ENCODE measurements at regions of chr2 and their contacts with region 1.

Region 1: GRCh38 chr2:19746611-19747309 is 155.0 kb downstream of the TTC32 start:
- DNase-seq: peak; percentile 47 to 83
- H3K4me3 ChIP-seq: no peak overlapping the region
- H3K27ac ChIP-seq: no peak overlapping the region
- H3K4me1 ChIP-seq: no peaks in the 10 kb centered on the region
- H3K27me3 ChIP-seq: no peaks in the 10 kb centered on the region
- CTCF ChIP-seq: peak; percentile 77 to 84 (median 77)
- EP300 ChIP-seq: no peak
- POLR2A ChIP-seq: no peak
- RAD21 ChIP-seq: peak; percentile 92 to 96

Region 2: DNA sequence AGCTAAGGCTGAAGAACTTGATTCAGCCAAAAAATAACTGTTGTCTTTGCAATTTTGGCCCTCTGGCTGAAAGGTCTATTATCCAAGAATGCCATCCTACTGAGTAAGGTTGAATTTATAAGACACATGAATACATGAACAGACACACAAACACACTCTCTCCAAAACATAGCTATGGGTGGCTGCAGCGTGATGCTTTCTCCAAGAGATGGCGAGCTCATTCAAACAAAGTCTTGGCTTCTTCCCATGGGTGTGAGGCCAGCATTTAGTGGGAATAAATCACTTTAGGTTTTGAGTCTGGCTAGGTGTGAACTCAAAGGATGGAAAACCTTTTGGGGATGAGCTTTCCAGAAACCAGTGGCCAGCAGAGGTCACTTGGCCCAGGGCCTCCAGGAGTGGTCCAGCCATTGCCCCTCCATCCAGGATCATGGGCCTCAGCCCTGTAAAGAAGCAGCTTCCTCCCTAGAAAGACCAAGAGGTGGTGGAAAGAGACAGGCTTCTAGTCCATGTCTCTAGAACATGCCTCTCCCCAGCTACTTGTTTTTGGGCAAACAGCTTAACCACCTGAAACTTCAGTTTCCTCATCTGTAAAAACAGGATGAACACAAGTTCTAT is 377.3 kb before region 1 on chr2:
- CTCF ChIA-PET with region 1: interaction called, 55 read pairs
- POLR2A ChIA-PET with region 1: no interaction called
- DNase-seq: no peak
- H3K4me3 ChIP-seq: no peak overlapping the region
- H3K27ac ChIP-seq: no peak overlapping the region
- H3K4me1 ChIP-seq: no peaks in the 10 kb centered on the region
- H3K27me3 ChIP-seq: peaks cover 2 to 17% (median 8%) of the 10 kb centered on the region in 4 experiments
- CTCF ChIP-seq: peak; percentile 17 to 74 (median 51)
- EP300 ChIP-seq: no peak
- POLR2A ChIP-seq: no peak
- RAD21 ChIP-seq: peak; percentile 76 to 83

Region 3: GRCh38 chr2:19702267-19702666 is 44.5 kb before region 1 on chr2:
- CTCF ChIA-PET with region 1: interaction called, 23 read pairs
- POLR2A ChIA-PET with region 1: no interaction called
- DNase-seq: no peak
- H3K4me3 ChIP-seq: no peak overlapping the region
- H3K27ac ChIP-seq: no peak overlapping the region
- H3K4me1 ChIP-seq: no peaks in the 10 kb centered on the region
- H3K27me3 ChIP-seq: no peaks in the 10 kb centered on the region
- CTCF ChIP-seq: no peak
- EP300 ChIP-seq: no peak
- POLR2A ChIP-seq: no peak
- RAD21 ChIP-seq: no peak

Region 4: GRCh38 chr2:19728125-19728524 is 18.6 kb before region 1 on chr2:
- CTCF ChIA-PET with region 1: interaction called, 24 read pairs
- POLR2A ChIA-PET with region 1: no interaction called
- DNase-seq: no peak
- H3K4me3 ChIP-seq: no peak overlapping the region
- H3K27ac ChIP-seq: no peak overlapping the region
- H3K4me1 ChIP-seq: no peaks in the 10 kb centered on the region
- H3K27me3 ChIP-seq: no peaks in the 10 kb centered on the region
- CTCF ChIP-seq: no peak
- EP300 ChIP-seq: no peak
- POLR2A ChIP-seq: no peak
- RAD21 ChIP-seq: no peak

Region 5: DNA sequence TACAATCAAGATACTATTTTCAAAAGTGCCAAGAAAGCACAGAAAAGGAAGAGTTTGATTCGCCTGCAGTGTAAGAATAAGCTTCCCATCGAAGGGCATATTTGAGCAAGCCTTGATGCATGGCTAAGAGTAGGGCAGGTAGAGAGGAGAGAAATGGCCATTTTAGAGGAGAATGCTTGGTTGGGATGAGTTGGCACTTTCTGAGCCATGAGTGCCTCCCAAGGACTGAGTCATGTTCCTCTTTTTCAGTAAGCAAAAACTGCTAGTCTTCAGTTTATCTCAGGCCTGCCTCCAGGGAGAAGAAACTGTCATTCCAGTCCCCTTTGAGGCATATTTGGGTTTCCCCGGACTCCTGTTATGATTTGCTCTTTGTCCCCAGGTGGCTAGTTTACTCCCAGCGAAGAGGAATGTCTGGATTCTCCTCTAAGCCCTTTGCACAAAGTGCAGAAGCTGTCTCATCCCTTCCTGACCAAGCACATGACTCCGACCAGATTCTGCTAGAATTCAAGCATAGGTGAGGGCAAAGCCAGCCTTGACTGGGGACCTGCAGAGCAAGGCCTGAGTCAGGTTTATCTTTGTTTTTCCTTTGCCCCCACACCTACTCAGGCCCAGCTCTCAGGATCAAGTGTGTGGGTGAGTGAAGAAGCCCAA is 39.8 kb after region 1 on chr2:
- CTCF ChIA-PET with region 1: interaction called, 20 read pairs
- POLR2A ChIA-PET with region 1: no interaction called
- DNase-seq: no peak
- H3K4me3 ChIP-seq: no peak overlapping the region
- H3K27ac ChIP-seq: no peak overlapping the region
- H3K4me1 ChIP-seq: peaks cover 5 to 15% (median 9%) of the 10 kb centered on the region in 4 experiments; a peak in 6 of 7 replicates
- H3K27me3 ChIP-seq: no peaks in the 10 kb centered on the region; a peak in 1 of 7 replicates
- CTCF ChIP-seq: no peak
- EP300 ChIP-seq: no peak
- POLR2A ChIP-seq: no peak
- RAD21 ChIP-seq: no peak

Region 6: GRCh38 chr2:19863303-19864041 is 116.7 kb after region 1 on chr2:
- CTCF ChIA-PET with region 1: interaction called, 33 read pairs
- POLR2A ChIA-PET with region 1: no interaction called
- DNase-seq: peak; percentile 88 to 99
- H3K4me3 ChIP-seq: peak overlapping the region in 3 of 4 experiments; percentile 44 to 52 (median 50); a peak in 7 of 8 replicates
- H3K27ac ChIP-seq: no peak overlapping the region
- H3K4me1 ChIP-seq: no peaks in the 10 kb centered on the region
- H3K27me3 ChIP-seq: peaks cover 0 to 13% (median 11%) of the 10 kb centered on the region in 4 experiments; a peak in 6 of 7 replicates
- CTCF ChIP-seq: peak; percentile 80 to 95 (median 91)
- EP300 ChIP-seq: 0 out of 3 replicates have a peak, but pooled peaks of 1 of the 2 experiments have one; percentile 55
- POLR2A ChIP-seq: no peak; a peak in 1 of 3 replicates
- RAD21 ChIP-seq: peak; percentile 99 to 100

Measured in H1 (cell line).